Activated CD4-positive, alpha-beta memory T cell treated with anti-CD3 and anti-CD28 coated beads for 36 hours (primary cell): ENCODE measurements at regions of chr17 and their contacts with region 1.

Region 1: GRCh38 chr17:48457080-48457836 is 27.2 kb upstream of the SKAP1 start:
- DNase-seq: peak; percentile 84
- H3K4me3 Mint-ChIP-seq: peak overlapping the region; percentile 54
- H3K27ac Mint-ChIP-seq: peak overlapping the region; percentile 38
- H3K4me1 Mint-ChIP-seq: peaks cover 60% of the 10 kb centered on the region
- H3K27me3 Mint-ChIP-seq: no peaks in the 10 kb centered on the region

Region 2: GRCh38 chr17:48351831-48352332 is 105.4 kb before region 1 on chr17:
- CTCF ChIA-PET with region 1: interaction called, 58 read pairs
- POLR2A ChIA-PET with region 1: no interaction called
- intact Hi-C with region 1: loop called (anchors 1 kb)
- DNase-seq: no peak
- H3K4me3 Mint-ChIP-seq: no peak overlapping the region
- H3K27ac Mint-ChIP-seq: no peak overlapping the region
- H3K4me1 Mint-ChIP-seq: peaks cover 6% of the 10 kb centered on the region
- H3K27me3 Mint-ChIP-seq: no peaks in the 10 kb centered on the region

Region 3: DNA sequence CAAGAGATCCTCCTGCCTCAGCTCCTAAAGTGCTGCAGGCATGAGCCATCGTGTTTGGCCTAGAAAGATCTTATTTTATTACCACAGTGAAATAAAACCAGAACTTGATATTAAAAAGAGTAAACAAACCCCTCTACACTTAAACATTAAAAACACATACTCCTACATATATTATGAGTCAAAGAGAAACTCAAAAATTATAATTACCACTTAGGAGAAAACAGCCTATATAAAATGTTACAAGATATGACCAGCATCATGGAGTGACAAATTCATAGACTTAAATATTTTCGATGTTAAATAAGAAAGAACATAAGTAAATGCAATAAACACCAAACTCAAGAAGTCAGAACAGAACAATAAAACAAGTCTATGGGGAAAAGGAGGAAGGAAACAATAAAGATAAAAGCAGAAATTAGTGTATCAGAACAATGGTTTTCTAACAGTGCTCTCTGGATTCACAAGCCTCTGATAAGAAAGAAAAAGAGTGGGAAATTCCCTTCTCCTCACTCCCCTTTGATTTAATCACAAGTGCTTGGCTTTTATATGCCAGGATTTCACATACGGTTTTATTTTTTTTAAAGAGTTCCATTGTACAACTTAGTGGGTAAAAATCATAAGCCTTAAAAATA is 50.2 kb before region 1 on chr17:
- CTCF ChIA-PET with region 1: interaction called, 13 read pairs
- POLR2A ChIA-PET with region 1: no interaction called
- intact Hi-C with region 1: no loop called
- DNase-seq: no peak
- H3K4me3 Mint-ChIP-seq: peak overlapping the region; percentile 14
- H3K27ac Mint-ChIP-seq: peak overlapping the region; percentile 81
- H3K4me1 Mint-ChIP-seq: peaks cover 62% of the 10 kb centered on the region
- H3K27me3 Mint-ChIP-seq: no peaks in the 10 kb centered on the region

Region 4: GRCh38 chr17:48427598-48427997 is 29.7 kb before region 1 on chr17:
- CTCF ChIA-PET with region 1: interaction called, 4 read pairs
- POLR2A ChIA-PET with region 1: no interaction called
- intact Hi-C with region 1: loop called (anchors 1 kb)
- DNase-seq: peak; percentile 81
- H3K4me3 Mint-ChIP-seq: peak overlapping the region; percentile 99
- H3K27ac Mint-ChIP-seq: peak overlapping the region; percentile 98
- H3K4me1 Mint-ChIP-seq: peaks cover 67% of the 10 kb centered on the region
- H3K27me3 Mint-ChIP-seq: no peaks in the 10 kb centered on the region

Region 5: GRCh38 chr17:48510761-48511604 is 53.7 kb after region 1 on chr17:
- CTCF ChIA-PET with region 1: interaction called, 4 read pairs
- POLR2A ChIA-PET with region 1: no interaction called
- intact Hi-C with region 1: loop called (anchors 1 kb)
- DNase-seq: peak; percentile 62
- H3K4me3 Mint-ChIP-seq: peak overlapping the region; percentile 29
- H3K27ac Mint-ChIP-seq: peak overlapping the region; percentile 77
- H3K4me1 Mint-ChIP-seq: peaks cover 41% of the 10 kb centered on the region
- H3K27me3 Mint-ChIP-seq: peaks cover 5% of the 10 kb centered on the region